ENCODE measurements at regions of chr22 and their contacts with region 1.

Region 1: GRCh38 chr22:35150183-35151107 is 84.5 kb downstream of the ISX start:
- DNase-seq: no peak
- ATAC-seq: peak; percentile 87
- H3K4me3 ChIP-seq: no peak overlapping the region
- H3K27ac ChIP-seq: peak overlapping the region; percentile 56
- H3K4me1 ChIP-seq: peaks cover 19% of the 10 kb centered on the region
- H3K27me3 ChIP-seq: no peaks in the 10 kb centered on the region
- CTCF ChIP-seq: peak; percentile 79 to 87 (median 82)
- EP300 ChIP-seq: no peak
- POLR2A ChIP-seq: no peak
- RAD21 ChIP-seq: peak; percentile 88

Region 2: DNA sequence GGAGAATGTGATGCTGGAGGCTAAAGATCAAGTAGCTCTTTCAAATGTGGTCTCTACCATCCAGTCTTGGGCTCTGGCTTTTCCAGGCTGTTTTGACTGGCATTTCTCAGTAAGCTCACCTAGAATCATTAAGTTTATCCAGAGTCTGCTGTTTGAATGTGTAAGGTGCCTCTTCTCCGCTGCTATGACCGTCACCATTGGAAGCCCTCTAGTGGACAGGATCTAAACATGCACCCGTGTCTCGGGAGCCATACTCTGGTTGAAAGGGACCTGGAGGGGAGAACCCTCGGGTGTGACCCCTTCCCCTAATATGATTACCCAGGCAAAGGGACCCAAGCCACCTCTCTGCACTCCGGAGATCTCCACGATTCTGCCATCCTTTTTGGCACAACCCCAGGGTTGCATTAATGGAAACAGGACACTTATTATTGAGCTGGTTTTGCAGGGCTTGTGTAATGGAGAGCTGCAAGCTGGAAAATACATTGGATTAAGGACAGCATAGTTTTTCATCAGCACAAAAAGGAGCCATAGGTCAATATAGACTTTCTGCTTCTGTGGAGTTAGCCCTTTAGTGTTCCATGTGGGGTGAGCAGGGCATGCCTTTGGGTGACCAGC is 1039.1 kb before region 1 on chr22:
- CTCF ChIA-PET with region 1: interaction called, 3 read pairs
- POLR2A ChIA-PET with region 1: no interaction called
- RAD21 ChIA-PET with region 1: no interaction called
- SMC1A ChIA-PET with region 1: no interaction called
- in situ Hi-C with region 1: no loop called
- intact Hi-C with region 1: loop called (anchors 10 kb)
- DNase-seq: no peak
- ATAC-seq: peak; percentile 75
- H3K4me3 ChIP-seq: no peak overlapping the region
- H3K27ac ChIP-seq: no peak overlapping the region
- H3K4me1 ChIP-seq: no peaks in the 10 kb centered on the region
- H3K27me3 ChIP-seq: no peaks in the 10 kb centered on the region
- CTCF ChIP-seq: peak; percentile 61 to 82 (median 79)
- EP300 ChIP-seq: no peak
- POLR2A ChIP-seq: no peak
- RAD21 ChIP-seq: peak; percentile 59

Region 3: DNA sequence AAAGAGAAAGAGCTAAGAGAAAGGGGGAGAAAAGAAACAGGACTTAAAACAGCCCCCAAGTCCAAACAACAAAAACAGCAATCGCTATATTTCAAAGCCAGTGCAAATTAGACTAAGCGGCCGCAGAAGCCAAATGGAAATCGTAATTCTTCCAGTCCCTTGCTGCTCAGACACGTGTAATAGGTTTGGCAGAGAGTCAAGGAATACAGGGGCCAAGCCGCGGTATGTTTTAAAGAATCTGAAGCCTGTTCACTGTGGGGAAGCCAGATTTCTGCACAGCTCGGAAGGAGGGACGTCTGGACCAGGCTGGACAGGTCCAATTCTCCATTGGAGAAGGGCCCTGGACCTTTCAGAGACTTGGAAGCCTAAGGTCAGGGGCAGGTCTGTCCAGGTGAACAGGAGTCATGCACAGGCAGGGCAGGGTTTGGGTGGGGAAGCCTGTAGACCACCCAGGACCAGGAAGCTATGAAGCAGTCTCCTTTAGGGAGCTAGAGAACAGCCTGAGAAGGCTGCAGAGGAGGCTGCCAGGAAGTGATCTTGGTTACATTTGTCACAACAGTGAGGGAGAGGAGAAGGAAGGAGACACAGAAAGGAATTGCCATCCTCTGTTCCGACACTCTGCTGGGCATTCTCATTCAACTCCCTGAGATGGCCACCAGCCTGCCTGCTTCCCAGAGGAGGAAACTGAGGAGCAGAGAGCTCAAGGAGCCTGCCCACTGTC is 350.0 kb before region 1 on chr22:
- CTCF ChIA-PET with region 1: interaction called, 7 read pairs
- POLR2A ChIA-PET with region 1: no interaction called
- RAD21 ChIA-PET with region 1: interaction called, 4 read pairs
- SMC1A ChIA-PET with region 1: no interaction called
- in situ Hi-C with region 1: loop called (anchors 10 kb)
- intact Hi-C with region 1: no loop called
- DNase-seq: no peak
- ATAC-seq: no peak
- H3K4me3 ChIP-seq: no peak overlapping the region
- H3K27ac ChIP-seq: no peak overlapping the region
- H3K4me1 ChIP-seq: no peaks in the 10 kb centered on the region
- H3K27me3 ChIP-seq: peaks cover 0 to 2% of the 10 kb centered on the region in 2 experiments; a peak in 1 of 4 replicates
- CTCF ChIP-seq: no peak
- EP300 ChIP-seq: no peak
- POLR2A ChIP-seq: no peak
- RAD21 ChIP-seq: no peak

Region 4: GRCh38 chr22:35037089-35037488 is 113.4 kb before region 1 on chr22:
- CTCF ChIA-PET with region 1: interaction called, 69 read pairs
- POLR2A ChIA-PET with region 1: interaction called, 5 read pairs
- RAD21 ChIA-PET with region 1: interaction called, 11 read pairs
- SMC1A ChIA-PET with region 1: interaction called, 6 read pairs
- in situ Hi-C with region 1: no loop called
- intact Hi-C with region 1: no loop called
- DNase-seq: no peak
- ATAC-seq: peak; percentile 44; the same call in 2 of the 3 replicates
- H3K4me3 ChIP-seq: no peak overlapping the region
- H3K27ac ChIP-seq: no peak overlapping the region
- H3K4me1 ChIP-seq: no peaks in the 10 kb centered on the region; the same call in 1 of the 2 replicates
- H3K27me3 ChIP-seq: no peaks in the 10 kb centered on the region
- CTCF ChIP-seq: peak; percentile 28 to 43 (median 29); a peak in 5 of 6 replicates
- EP300 ChIP-seq: no peak
- POLR2A ChIP-seq: no peak
- RAD21 ChIP-seq: peak; percentile 47

Region 5: DNA sequence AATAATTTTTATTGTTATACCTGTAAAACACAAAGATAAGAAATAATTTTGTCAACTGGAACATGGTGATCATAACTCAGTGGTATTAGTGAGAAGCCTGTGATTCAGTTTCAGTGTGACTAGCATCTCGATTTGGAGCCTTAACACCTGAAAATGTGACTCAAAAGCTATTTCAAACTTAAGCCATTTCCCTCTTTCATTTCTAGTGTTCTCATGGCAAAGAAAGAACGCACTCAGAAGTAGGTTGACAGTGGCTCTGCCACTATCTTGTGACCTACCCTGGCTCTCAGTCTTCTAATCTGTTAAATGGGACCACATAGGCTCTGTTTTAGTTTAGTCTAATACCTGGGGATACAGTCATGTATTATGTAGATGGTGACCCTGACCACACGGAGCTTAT is 21.8 kb before region 1 on chr22:
- CTCF ChIA-PET with region 1: interaction called, 19 read pairs
- POLR2A ChIA-PET with region 1: interaction called, 3 read pairs
- RAD21 ChIA-PET with region 1: interaction called, 9 read pairs
- SMC1A ChIA-PET with region 1: interaction called, 16 read pairs
- in situ Hi-C with region 1: no loop called
- intact Hi-C with region 1: no loop called
- DNase-seq: peak; percentile 95
- ATAC-seq: peak; percentile 78
- H3K4me3 ChIP-seq: no peak overlapping the region
- H3K27ac ChIP-seq: peak overlapping the region; percentile 99
- H3K4me1 ChIP-seq: peaks cover 80% of the 10 kb centered on the region
- H3K27me3 ChIP-seq: no peaks in the 10 kb centered on the region
- CTCF ChIP-seq: no peak
- EP300 ChIP-seq: peak; percentile 81 to 95
- POLR2A ChIP-seq: no peak
- RAD21 ChIP-seq: peak; percentile 13; the same call in 1 of the 2 replicates